ENCODE measurements at regions of chr11 and their contacts with region 1.

Region 1: DNA sequence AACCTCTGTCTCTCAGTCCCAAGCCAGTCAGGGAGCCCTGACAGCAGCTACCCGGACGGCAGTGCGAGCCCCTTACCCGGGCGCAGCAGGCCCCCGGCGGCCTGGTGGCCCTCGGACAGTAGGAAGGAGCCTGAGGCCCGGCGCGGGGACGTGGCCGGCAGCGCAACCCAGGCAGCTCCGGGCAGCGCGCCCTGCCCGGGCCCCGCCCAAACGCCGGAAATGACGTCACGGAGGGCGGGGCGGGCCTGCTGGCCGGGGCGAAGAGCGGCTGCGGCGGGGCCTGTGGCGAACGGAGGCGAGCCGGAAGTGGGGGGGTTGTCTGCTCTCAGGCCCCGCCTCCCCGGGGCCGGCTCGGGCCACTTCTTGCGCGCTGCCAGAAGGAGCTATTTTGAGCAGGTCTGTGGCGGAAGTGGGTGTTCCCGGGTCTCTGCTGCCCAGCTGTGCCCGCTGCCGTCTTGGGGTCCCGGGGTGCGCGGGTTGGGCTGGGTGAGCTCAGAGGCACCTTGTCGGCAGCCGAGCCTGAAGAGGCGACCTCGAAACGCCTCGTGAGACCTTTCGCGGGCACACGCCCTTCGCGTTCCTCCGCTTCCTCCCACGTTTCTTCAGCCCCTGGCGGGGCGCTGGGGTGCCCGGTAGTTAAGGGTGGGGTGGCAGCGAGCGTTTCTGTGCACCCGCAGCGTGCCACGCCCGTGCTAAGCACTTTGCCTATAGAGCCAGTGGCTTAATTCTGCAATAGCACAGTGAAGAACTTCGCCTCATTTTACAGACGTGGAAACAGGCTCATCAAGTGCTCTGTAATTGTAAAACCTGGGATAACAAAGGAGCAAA is at the start of gene C11orf24:
- DNase-seq: peak; percentile 93
- H3K4me3 Mint-ChIP-seq: peak within 1 kb of the TSS; percentile 96
- H3K27ac Mint-ChIP-seq: peak within 1 kb of the TSS; percentile 93
- H3K4me1 Mint-ChIP-seq: peaks cover 23% of the 10 kb centered on the region
- H3K27me3 Mint-ChIP-seq: no peaks in the 10 kb centered on the region
- total RNA-seq, gene C11orf24: 33.9 and 39.7 TPM in 2 replicates

Region 2: DNA sequence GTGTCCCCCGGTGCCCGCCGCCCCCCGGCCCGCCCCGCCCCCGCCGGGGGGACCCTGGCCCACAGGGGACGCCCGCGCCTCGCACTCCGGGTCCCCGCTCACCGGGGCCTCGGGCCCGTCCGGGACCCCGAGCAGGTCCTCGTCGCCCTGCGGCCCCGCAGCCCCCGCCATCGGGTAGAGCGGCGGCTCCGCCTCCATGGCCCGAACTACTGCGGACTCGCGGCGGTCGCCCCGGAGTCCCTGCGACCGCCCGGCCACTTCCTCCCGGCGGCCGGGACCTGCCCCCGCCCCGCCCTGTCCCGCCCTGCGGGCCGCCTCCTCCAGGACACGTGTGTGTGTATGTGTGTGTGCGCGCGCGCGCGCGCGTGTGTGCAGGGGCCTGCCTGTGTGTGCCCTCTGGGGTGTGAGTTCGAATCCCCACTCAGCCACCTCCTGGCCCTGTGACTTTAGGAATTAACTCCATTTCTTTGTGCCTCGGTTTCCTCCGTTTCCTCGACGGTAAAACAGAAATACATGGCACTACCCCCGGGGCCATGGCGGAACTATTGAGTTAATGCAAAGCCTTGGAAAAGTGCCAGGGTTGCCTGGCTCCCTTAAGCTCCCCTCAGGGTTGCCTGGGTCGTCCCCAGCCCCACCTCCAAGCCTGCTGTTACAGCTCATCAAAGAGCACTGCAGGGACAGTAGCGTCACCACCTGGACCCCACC is 268.0 kb before region 1 on chr11 and contains the start of gene UNC93B1:
- intact Hi-C with region 1: no loop called
- DNase-seq: peak; percentile 81
- H3K4me3 Mint-ChIP-seq: peak within 1 kb of the TSS; percentile 85
- H3K27ac Mint-ChIP-seq: peak within 1 kb of the TSS; percentile 82
- H3K4me1 Mint-ChIP-seq: peaks cover 27% of the 10 kb centered on the region
- H3K27me3 Mint-ChIP-seq: no peaks in the 10 kb centered on the region
- total RNA-seq, gene UNC93B1: 13.9 and 14.8 TPM in 2 replicates

Region 3: GRCh38 chr11:68030318-68031138 is 241.5 kb before region 1 on chr11 and contains the start of gene NDUFS8:
- intact Hi-C with region 1: loop called (anchors 1 kb)
- DNase-seq: peak; percentile 96
- H3K4me3 Mint-ChIP-seq: peak within 1 kb of the TSS; percentile 92
- H3K27ac Mint-ChIP-seq: peak within 1 kb of the TSS; percentile 82
- H3K4me1 Mint-ChIP-seq: peaks cover 20% of the 10 kb centered on the region
- H3K27me3 Mint-ChIP-seq: peaks cover 1% of the 10 kb centered on the region
- total RNA-seq, gene NDUFS8: 137 and 144 TPM in 2 replicates

Region 4: GRCh38 chr11:68257475-68258362 is 14.3 kb before region 1 on chr11:
- intact Hi-C with region 1: loop called (anchors 1 kb)
- DNase-seq: peak; percentile 83
- H3K4me3 Mint-ChIP-seq: no peak overlapping the region
- H3K27ac Mint-ChIP-seq: no peak overlapping the region
- H3K4me1 Mint-ChIP-seq: peaks cover 5% of the 10 kb centered on the region
- H3K27me3 Mint-ChIP-seq: peaks cover 4% of the 10 kb centered on the region

Region 5: GRCh38 chr11:68297812-68298658 is 26.0 kb after region 1 on chr11:
- intact Hi-C with region 1: loop called (anchors 1 kb)
- DNase-seq: peak; percentile 60
- H3K4me3 Mint-ChIP-seq: no peak overlapping the region
- H3K27ac Mint-ChIP-seq: no peak overlapping the region
- H3K4me1 Mint-ChIP-seq: no peaks in the 10 kb centered on the region
- H3K27me3 Mint-ChIP-seq: peaks cover 8% of the 10 kb centered on the region

Region 6: GRCh38 chr11:68328374-68329091 is 56.5 kb after region 1 on chr11:
- intact Hi-C with region 1: no loop called
- DNase-seq: no peak
- H3K4me3 Mint-ChIP-seq: no peak overlapping the region
- H3K27ac Mint-ChIP-seq: no peak overlapping the region
- H3K4me1 Mint-ChIP-seq: peaks cover 58% of the 10 kb centered on the region
- H3K27me3 Mint-ChIP-seq: no peaks in the 10 kb centered on the region

Region 7: DNA sequence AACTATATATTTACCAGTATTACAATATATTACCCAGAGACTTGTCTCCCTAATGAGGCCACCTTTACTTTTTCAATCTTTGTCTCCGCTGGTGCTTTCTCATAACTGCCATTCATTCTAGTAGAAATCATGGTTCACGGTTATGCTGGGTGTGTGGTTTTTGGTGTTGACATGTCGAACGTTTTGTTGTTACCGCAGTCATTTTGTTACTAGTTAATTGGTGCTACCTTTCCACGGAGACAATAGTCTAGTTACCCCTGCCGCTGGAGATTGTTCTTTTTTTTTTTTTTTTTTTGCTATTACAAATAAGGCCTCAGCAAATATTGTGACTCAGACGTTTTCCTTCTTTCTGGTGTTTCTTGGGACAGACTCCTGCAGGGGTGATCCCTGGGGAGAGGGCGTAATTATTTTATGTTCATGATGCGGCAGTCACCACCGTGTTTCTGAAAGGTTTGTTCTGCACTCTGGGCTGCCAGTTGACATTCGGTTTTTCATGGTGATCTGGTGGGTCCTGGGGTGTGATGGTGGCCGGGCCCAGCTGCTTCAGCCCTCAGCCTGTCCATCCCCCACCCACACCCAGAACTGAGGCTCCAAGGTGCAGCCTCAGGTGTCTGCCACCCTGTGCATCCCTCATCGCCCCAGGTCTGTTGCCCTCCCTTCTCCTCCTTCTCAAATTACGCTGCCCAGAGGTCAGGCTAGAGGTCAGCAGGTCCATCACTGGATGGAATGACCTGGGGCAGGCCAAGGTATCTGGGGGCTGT is 69.0 kb after region 1 on chr11:
- intact Hi-C with region 1: loop called (anchors 2 kb)
- DNase-seq: peak; percentile 17
- H3K4me3 Mint-ChIP-seq: no peak overlapping the region
- H3K27ac Mint-ChIP-seq: peak overlapping the region; percentile 36
- H3K4me1 Mint-ChIP-seq: peaks cover 57% of the 10 kb centered on the region
- H3K27me3 Mint-ChIP-seq: no peaks in the 10 kb centered on the region